PC-3 (cell line): ENCODE measurements at regions of chr11 and their contacts with region 1.

Region 1: DNA sequence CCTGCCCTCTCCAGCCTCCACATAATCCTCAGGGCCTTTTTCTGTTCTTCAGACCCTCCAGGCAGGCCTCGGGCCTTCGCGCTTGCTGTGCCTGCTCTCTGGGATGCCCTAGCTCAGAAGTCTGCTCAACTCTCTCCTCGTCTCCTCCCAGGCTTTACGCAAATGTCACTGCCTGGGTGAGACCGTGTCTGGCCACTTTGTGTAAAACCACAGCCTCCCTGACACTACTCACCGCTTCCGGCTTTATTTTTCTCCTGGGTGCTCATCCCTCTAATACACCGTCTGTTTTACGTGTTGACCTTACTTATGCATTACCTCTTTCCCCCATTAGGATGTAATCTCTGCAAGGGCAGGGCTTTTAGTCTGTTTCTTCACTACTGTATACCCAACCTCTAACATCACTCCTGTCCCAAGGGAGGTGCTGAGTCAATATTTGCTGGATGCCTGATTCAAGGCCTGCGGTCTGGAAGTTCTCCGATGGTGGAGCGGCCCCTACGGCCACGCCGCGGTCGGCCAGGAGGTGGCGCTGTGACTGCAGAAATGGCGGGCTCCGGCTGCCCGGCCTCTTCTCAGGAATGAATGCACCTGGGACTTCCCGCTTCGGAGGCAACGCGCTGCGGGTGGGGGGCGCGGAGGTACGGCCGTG is 58.2 kb upstream of the THY1 start:
- DNase-seq: peak; percentile 99
- ATAC-seq: peak; percentile 98
- H3K4me3 ChIP-seq: no peak overlapping the region
- H3K27ac ChIP-seq: peak overlapping the region; percentile 78
- H3K4me1 ChIP-seq: peaks cover 10% of the 10 kb centered on the region
- H3K27me3 ChIP-seq: no peaks in the 10 kb centered on the region
- CTCF ChIP-seq: peak; percentile 99

Region 2: GRCh38 chr11:119334174-119334930 is 146.8 kb before region 1 on chr11 and contains the start of gene RNF26:
- CTCF ChIA-PET with region 1: interaction called, 13 read pairs
- POLR2A ChIA-PET with region 1: no interaction called
- intact Hi-C with region 1: no loop called
- DNase-seq: peak; percentile 99
- ATAC-seq: peak; percentile 80
- H3K4me3 ChIP-seq: peak within 1 kb of the TSS; percentile 87
- H3K27ac ChIP-seq: peak within 1 kb of the TSS; percentile 52
- H3K4me1 ChIP-seq: peaks cover 42% of the 10 kb centered on the region
- H3K27me3 ChIP-seq: no peaks in the 10 kb centered on the region
- CTCF ChIP-seq: no peak
- total RNA-seq, gene RNF26: 22.9 and 34.5 TPM in 2 replicates

Region 3: GRCh38 chr11:119594639-119595249 is 113.6 kb after region 1 on chr11:
- CTCF ChIA-PET with region 1: no interaction called
- POLR2A ChIA-PET with region 1: no interaction called
- intact Hi-C with region 1: loop called (anchors 2 kb)
- DNase-seq: peak; percentile 85
- ATAC-seq: peak; percentile 28
- H3K4me3 ChIP-seq: no peak overlapping the region; the same call in 1 of the 2 replicates
- H3K27ac ChIP-seq: peak overlapping the region; percentile 73
- H3K4me1 ChIP-seq: peaks cover 62% of the 10 kb centered on the region
- H3K27me3 ChIP-seq: no peaks in the 10 kb centered on the region
- CTCF ChIP-seq: no peak

Region 4: DNA sequence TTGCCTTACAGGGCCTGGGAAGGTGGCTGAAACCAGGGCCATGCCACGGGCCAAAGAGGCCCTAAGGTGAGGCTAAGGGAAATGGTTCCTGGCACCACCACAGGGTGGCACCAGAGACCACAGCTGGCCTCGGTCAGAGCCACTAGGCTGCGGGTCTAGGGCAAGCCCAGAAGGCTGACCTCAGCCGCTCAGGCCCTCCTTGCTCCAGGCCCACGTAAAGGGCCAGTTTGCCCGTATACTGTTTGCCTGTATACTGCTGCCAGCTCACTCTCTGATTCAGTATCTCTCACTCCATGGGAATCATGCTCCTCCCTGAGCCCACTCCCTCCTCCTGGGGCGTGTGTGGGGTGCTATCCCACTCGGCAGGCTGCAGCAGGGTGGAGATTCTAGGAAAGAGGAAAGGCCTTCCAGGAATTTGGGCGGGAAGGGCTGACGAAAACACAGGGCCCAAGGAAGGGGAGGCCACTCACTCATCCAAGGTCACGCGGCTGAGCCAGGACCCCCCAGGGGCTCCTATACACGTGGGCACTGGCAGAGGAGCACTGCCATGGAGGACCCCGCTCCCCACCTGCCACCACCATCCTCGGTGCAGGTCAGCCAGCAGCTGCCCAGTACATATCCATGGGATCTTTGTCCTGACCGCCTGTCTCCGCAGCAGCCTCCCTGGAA is 185.5 kb after region 1 on chr11:
- CTCF ChIA-PET with region 1: no interaction called
- POLR2A ChIA-PET with region 1: no interaction called
- intact Hi-C with region 1: loop called (anchors 1 kb)
- DNase-seq: peak; percentile 89
- ATAC-seq: peak; percentile 98
- H3K4me3 ChIP-seq: no peak overlapping the region
- H3K27ac ChIP-seq: no peak overlapping the region
- H3K4me1 ChIP-seq: peaks cover 7% of the 10 kb centered on the region; the same call in 1 of the 2 replicates
- H3K27me3 ChIP-seq: no peaks in the 10 kb centered on the region
- CTCF ChIP-seq: peak; percentile 97

Region 5: DNA sequence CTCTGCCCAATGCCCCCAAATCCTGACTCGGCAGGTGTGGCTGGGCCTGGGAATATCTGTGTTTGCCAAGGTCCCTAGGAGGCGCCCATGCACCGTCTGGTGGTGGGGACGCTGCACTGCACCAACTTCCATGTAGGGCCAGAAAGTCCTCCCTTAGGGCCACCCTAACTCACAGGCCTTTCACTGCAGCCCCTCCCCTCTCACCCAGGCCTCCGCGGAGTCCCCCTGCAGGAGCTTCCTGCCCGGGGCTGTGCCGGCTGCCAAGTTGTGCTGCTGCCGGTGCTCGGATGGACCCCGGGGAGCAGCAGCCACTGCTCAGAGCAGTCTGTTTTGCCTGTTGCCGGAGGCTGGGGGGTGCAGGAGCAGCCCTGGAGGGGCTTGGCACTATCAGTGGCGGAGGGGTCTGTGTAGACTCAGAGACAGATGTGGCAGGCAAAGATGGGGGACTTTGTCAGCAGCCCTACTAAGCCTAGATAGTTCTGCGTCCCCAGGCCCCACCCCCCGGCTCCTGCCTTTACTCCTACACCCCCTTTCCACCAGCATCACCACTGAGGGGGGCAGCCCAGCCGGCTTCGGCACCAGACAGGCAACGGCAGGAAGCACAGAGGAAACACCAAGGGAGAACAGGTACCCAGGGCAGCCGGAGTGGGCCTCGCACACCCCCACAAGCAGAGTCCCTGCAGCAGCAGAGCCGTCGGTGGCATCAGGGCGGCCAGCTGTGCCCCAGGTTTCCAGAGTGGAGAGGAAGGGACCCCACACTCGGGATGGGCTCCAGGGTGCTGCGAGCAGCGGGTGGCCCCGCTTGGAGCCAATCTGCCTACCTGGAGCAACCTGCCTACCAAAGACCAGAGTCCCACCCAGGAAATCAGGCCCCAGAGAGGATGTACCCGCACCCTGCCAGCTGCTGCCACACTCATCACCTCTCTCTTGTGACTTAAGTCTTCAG is 532.5 kb after region 1 on chr11:
- CTCF ChIA-PET with region 1: no interaction called
- POLR2A ChIA-PET with region 1: no interaction called
- intact Hi-C with region 1: loop called (anchors 1 kb)
- DNase-seq: peak; percentile 65
- ATAC-seq: peak; percentile 73
- H3K4me3 ChIP-seq: no peak overlapping the region
- H3K27ac ChIP-seq: no peak overlapping the region
- H3K4me1 ChIP-seq: no peaks in the 10 kb centered on the region
- H3K27me3 ChIP-seq: peaks cover 97% of the 10 kb centered on the region
- CTCF ChIP-seq: peak; percentile 85